ENCODE measurements at regions of chr4 and their contacts with region 1.

Region 1: GRCh38 chr4:78612398-78613178 is 61.0 kb downstream of the ANXA3 start:
- DNase-seq: no peak
- ATAC-seq: peak; percentile 28
- H3K4me3 Mint-ChIP-seq: peak overlapping the region; percentile 15
- H3K27ac Mint-ChIP-seq: peak overlapping the region; percentile 87
- H3K4me1 Mint-ChIP-seq: peaks cover 67% of the 10 kb centered on the region
- H3K27me3 Mint-ChIP-seq: no peaks in the 10 kb centered on the region
- CTCF ChIP-seq: peak; percentile 28

Region 2: GRCh38 chr4:78320349-78320935 is 292.1 kb before region 1 on chr4:
- CTCF ChIA-PET with region 1: no interaction called
- POLR2A ChIA-PET with region 1: no interaction called
- intact Hi-C with region 1: no loop called
- DNase-seq: no peak
- ATAC-seq: no peak
- H3K4me3 Mint-ChIP-seq: no peak overlapping the region
- H3K27ac Mint-ChIP-seq: no peak overlapping the region
- H3K4me1 Mint-ChIP-seq: peaks cover 8% of the 10 kb centered on the region
- H3K27me3 Mint-ChIP-seq: peaks cover 10% of the 10 kb centered on the region
- CTCF ChIP-seq: no peak

Region 3: GRCh38 chr4:78592104-78592783 is 20.3 kb before region 1 on chr4:
- CTCF ChIA-PET with region 1: interaction called, 4 read pairs
- POLR2A ChIA-PET with region 1: interaction called, 3 read pairs
- intact Hi-C with region 1: loop called (anchors 1 kb)
- DNase-seq: no peak
- ATAC-seq: no peak
- H3K4me3 Mint-ChIP-seq: no peak overlapping the region
- H3K27ac Mint-ChIP-seq: no peak overlapping the region
- H3K4me1 Mint-ChIP-seq: peaks cover 22% of the 10 kb centered on the region
- H3K27me3 Mint-ChIP-seq: no peaks in the 10 kb centered on the region
- CTCF ChIP-seq: no peak

Region 4: DNA sequence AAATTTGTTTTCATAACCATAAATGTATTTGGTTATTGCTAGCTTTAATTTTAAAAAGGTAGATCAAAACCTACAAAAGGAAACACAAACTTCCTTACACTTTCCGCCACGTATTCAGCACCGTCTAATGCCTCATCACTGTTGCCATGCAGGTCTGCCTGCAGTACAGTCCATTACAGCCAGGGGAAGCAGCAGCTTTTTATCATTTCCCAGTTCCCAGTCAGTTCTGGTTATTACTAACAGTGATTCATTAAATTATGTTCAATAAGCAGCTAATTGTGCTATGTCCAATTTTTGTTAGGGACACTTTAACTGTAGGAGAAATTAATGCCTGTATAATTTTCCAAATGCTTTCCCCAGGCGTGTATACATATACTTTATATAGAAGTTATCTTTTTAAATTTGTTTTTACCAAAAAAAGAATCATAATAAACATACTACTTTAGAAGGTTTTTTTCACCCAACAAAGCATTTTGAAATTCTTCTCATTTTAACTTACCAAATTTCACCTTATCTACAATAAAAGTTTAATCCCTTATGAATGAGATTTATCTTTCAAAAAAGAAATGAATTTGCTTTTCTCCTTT is 32.2 kb after region 1 on chr4:
- CTCF ChIA-PET with region 1: interaction called, 51 read pairs
- POLR2A ChIA-PET with region 1: interaction called, 11 read pairs
- intact Hi-C with region 1: loop called (anchors 1 kb)
- DNase-seq: no peak
- ATAC-seq: peak; percentile 98
- H3K4me3 Mint-ChIP-seq: peak overlapping the region; percentile 26
- H3K27ac Mint-ChIP-seq: peak overlapping the region; percentile 53
- H3K4me1 Mint-ChIP-seq: peaks cover 70% of the 10 kb centered on the region
- H3K27me3 Mint-ChIP-seq: no peaks in the 10 kb centered on the region
- CTCF ChIP-seq: peak; percentile 39

Region 5: GRCh38 chr4:78704981-78705683 is 92.5 kb after region 1 on chr4:
- CTCF ChIA-PET with region 1: interaction called, 4 read pairs
- POLR2A ChIA-PET with region 1: no interaction called
- intact Hi-C with region 1: loop called (anchors 1 kb)
- DNase-seq: no peak
- ATAC-seq: no peak
- H3K4me3 Mint-ChIP-seq: no peak overlapping the region
- H3K27ac Mint-ChIP-seq: peak overlapping the region; percentile 46
- H3K4me1 Mint-ChIP-seq: peaks cover 42% of the 10 kb centered on the region
- H3K27me3 Mint-ChIP-seq: no peaks in the 10 kb centered on the region
- CTCF ChIP-seq: no peak

Region 6: GRCh38 chr4:78864405-78865024 is 251.9 kb after region 1 on chr4:
- CTCF ChIA-PET with region 1: interaction called, 34 read pairs
- POLR2A ChIA-PET with region 1: interaction called, 8 read pairs
- intact Hi-C with region 1: loop called (anchors 1 kb)
- DNase-seq: no peak
- ATAC-seq: peak; percentile 47
- H3K4me3 Mint-ChIP-seq: peak overlapping the region; percentile 21
- H3K27ac Mint-ChIP-seq: peak overlapping the region; percentile 70
- H3K4me1 Mint-ChIP-seq: peaks cover 18% of the 10 kb centered on the region
- H3K27me3 Mint-ChIP-seq: no peaks in the 10 kb centered on the region
- CTCF ChIP-seq: peak; percentile 25

Measured in activated B cell treated with CpG ODN at 0.5 μM for 24 hours (primary cell).